Kidney (tissue), 22 donors: ENCODE measurements at regions of chr17 and their contacts with region 1.

Region 1: DNA sequence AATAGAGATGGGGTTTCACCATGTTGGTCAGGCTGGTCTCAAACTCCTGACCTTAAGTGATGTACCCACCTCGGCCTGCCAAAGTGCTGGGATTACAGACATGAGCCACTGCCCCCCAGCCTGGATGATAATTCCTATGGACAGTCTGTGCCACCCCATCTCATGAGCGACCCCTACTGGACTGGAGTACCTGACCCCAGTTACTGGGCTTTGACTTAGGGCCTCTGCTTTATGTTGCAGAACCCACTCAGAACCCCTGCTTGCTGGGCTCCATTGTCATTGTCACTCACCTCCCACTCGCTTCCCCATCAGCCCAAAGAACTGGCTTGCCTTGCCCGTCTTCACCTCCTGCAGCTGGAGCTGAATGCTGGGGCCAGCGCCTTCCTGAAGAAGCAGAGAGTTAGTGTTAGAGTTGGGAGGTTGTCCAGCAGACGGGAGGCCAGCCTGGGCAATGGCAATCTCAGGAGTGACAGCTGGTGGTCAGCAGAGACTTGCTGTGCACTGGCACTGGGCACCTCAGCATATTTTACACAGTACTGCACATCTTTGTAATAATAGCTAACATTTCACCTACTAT is 4.0 kb downstream of the TAC4 start:
- DNase-seq: no peak
- H3K4me3 ChIP-seq: no peak overlapping the region
- H3K27ac ChIP-seq: no peak overlapping the region
- H3K4me1 ChIP-seq: no peaks in the 10 kb centered on the region
- H3K27me3 ChIP-seq: no peaks in the 10 kb centered on the region
- CTCF ChIP-seq: no peak

Region 2: GRCh38 chr17:49715717-49716279 is 128.1 kb before region 1 on chr17:
- intact Hi-C with region 1: loop called (anchors 10 kb)
- DNase-seq: no peak
- H3K4me3 ChIP-seq: no peak overlapping the region
- H3K27ac ChIP-seq: no peak overlapping the region
- H3K4me1 ChIP-seq: no peaks in the 10 kb centered on the region
- H3K27me3 ChIP-seq: no peaks in the 10 kb centered on the region
- CTCF ChIP-seq: no peak

Region 3: DNA sequence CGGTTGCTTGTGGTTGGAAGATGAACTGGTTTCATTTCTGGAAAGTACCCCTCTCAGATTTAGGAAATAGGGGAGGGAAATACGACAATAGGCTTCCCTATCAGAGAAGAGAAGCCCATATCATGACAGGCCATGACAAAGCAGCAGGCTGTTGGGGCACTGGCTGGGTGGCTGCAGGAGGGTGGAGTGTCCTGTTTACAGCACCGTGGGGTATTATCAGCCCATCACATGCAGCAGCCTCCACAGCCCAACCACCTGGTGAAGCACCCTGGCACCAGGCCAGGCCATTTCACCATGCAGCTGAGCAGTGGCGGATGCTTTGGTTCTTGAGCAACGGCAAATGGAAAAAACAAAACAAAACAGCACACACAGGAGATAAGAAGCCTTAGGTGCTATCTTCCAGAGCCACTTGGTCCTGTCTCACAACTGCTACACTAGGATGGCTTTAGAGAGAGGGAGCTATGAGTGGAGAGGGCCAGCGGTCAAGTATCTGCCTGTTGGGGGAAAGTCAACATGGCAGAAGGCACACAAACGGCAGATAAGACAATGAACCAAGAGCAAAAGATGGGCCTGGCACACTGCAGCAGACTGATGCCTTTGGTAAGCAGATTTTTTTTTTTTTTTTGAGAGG is 104.1 kb before region 1 on chr17:
- intact Hi-C with region 1: no loop called
- DNase-seq: peak in 1 of 5 donors; percentile 93
- H3K4me3 ChIP-seq: no peak overlapping the region
- H3K27ac ChIP-seq: peak overlapping the region in 1 of 2 donors; percentile 43
- H3K4me1 ChIP-seq: peaks cover 0 to 14% (median 11%) of the 10 kb centered on the region in 3 donors
- H3K27me3 ChIP-seq: no peaks in the 10 kb centered on the region
- CTCF ChIP-seq: no peak

Region 4: GRCh38 chr17:49899191-49899485 is 55.3 kb after region 1 on chr17:
- intact Hi-C with region 1: no loop called
- DNase-seq: peak in 1 of 5 donors; percentile 44
- H3K4me3 ChIP-seq: no peak overlapping the region
- H3K27ac ChIP-seq: no peak overlapping the region
- H3K4me1 ChIP-seq: peaks cover 0 to 3% (median 0%) of the 10 kb centered on the region in 3 donors
- H3K27me3 ChIP-seq: no peaks in the 10 kb centered on the region
- CTCF ChIP-seq: no peak